Heart right ventricle (tissue), 16 donors: ENCODE measurements at regions of chrX and their contacts with region 1.

Region 1: DNA sequence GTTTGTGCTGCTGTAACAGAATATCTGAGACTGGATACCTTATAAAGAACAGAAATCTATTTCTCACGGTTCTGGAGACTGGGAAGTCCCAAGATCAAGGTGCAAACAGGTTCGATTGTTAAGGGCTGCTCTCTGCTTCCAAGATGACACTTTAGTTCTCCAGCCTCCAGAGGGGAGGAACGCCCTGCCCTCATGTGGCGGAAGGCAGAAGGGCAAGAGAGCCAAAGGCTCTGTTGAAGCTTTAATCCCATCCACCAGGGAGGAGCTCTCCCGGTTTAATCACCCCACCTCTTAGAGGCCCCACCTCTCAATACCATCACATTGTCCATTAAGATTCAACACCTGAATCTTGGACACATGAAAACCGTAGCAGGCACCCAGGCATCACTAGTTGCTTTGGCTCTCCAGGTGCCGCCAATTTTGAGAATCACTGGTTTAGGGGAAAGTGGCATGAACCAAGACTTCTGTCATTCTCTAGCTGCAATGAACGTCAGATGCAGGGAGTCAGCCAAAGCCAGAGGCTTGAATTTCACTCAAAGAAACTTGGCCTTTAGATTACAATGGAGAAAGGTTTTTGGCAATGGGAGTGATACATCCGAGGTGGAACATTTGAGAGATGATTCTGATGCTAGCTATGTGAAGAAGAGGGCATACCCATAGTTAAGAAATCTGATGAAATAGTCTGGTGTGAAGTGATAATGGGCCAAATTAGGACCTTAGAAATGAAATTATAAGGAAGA is 15.7 kb downstream of the FHL1 start:
- DNase-seq: peak; percentile 49 to 55
- ATAC-seq: peak; percentile 67 to 84 (median 75)
- H3K4me3 ChIP-seq: no peak overlapping the region
- H3K27ac ChIP-seq: peak overlapping the region in 7 of 10 donors; percentile 6 to 69 (median 52)
- H3K4me1 ChIP-seq: peaks cover 0 to 89% (median 6%) of the 10 kb centered on the region in 9 donors
- H3K27me3 ChIP-seq: peaks cover 0 to 23% (median 0%) of the 10 kb centered on the region in 7 donors
- CTCF ChIP-seq: peak; percentile 41 to 76 (median 67)

Region 2: GRCh38 chrX:136199365-136199764 is 36.4 kb after region 1 on chrX:
- intact Hi-C with region 1: loop called in 1 of 10 experiments (anchors 1 kb)
- DNase-seq: no peak
- ATAC-seq: peak in 1 of 8 donors; percentile 16
- H3K4me3 ChIP-seq: peak overlapping the region in 9 of 10 donors; percentile 4 to 54 (median 46)
- H3K27ac ChIP-seq: peak overlapping the region; percentile 39 to 92 (median 79)
- H3K4me1 ChIP-seq: peaks cover 6 to 71% (median 31%) of the 10 kb centered on the region in 9 donors
- H3K27me3 ChIP-seq: peaks cover 0 to 28% (median 0%) of the 10 kb centered on the region in 7 donors
- CTCF ChIP-seq: no peak

Region 3: GRCh38 chrX:136268051-136269048 is 105.3 kb after region 1 on chrX:
- intact Hi-C with region 1: loop called in 5 of 10 experiments (anchors 2 to 10 kb)
- DNase-seq: peak in 1 of 2 donors; percentile 40
- ATAC-seq: peak in 6 of 8 donors; percentile 33 to 65 (median 53)
- H3K4me3 ChIP-seq: no peak overlapping the region
- H3K27ac ChIP-seq: no peak overlapping the region
- H3K4me1 ChIP-seq: no peaks in the 10 kb centered on the region
- H3K27me3 ChIP-seq: peaks cover 0 to 20% (median 0%) of the 10 kb centered on the region in 7 donors
- CTCF ChIP-seq: peak; percentile 47 to 86 (median 68)